Gastrocnemius medialis (tissue), 4 donors: ENCODE measurements at regions of chr11 and their contacts with region 1.

Region 1: GRCh38 chr11:76444384-76445123 is at the start of gene EMSY:
- DNase-seq: peak; percentile 98
- ATAC-seq: peak; percentile 97 to 98
- H3K4me3 ChIP-seq: peak within 1 kb of the TSS; percentile 97 to 99 (median 99)
- H3K27ac ChIP-seq: peak within 1 kb of the TSS; percentile 97 to 98 (median 97)
- H3K4me1 ChIP-seq: peaks cover 16 to 25% of the 10 kb centered on the region in 2 donors
- H3K27me3 ChIP-seq: no peaks in the 10 kb centered on the region
- CTCF ChIP-seq: no peak
- POLR2A ChIP-seq: peak; percentile 95 to 98
- total RNA-seq, gene EMSY: 18.8 to 43.6 (median 19.9) TPM

Region 2: GRCh38 chr11:75654314-75654713 is 790.2 kb before region 1 on chr11:
- in situ Hi-C with region 1: no loop called
- intact Hi-C with region 1: no loop called
- DNase-seq: no peak
- ATAC-seq: no peak
- H3K4me3 ChIP-seq: no peak overlapping the region
- H3K27ac ChIP-seq: no peak overlapping the region
- H3K4me1 ChIP-seq: no peaks in the 10 kb centered on the region
- H3K27me3 ChIP-seq: no peaks in the 10 kb centered on the region
- CTCF ChIP-seq: no peak
- POLR2A ChIP-seq: no peak

Region 3: DNA sequence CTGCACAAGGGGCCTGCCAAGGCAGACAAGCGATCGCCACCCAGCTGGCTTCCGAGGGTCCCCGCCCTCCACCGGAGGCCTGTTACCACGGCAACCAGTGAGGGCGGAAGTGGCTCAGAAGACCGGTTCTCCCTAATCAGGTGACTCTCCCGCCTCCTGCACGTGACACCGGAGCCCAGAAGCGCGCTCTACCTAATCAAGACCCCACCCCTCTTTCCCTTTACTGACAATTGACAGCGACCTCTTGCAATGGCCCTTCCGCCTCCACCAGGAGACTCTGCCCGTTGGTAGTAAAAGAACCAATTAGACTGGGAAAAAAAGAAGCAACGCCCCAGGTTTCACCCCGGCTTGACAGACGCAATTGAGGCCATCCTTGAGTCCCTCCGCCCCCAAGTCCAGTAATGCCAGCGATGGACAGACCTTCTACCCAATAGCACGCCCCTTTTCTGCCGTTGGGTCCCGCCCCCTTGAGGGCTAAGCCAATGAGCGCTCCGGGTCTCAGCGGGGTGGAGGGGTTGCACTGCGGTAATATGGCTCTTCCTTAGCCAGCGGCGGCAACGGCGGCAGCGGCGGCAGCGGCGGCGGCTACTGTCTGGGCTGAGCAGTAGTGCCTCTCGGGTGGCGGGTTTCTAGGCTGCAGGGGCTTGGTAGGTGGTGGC is 629.7 kb before region 1 on chr11 and contains the start of gene UVRAG:
- in situ Hi-C with region 1: no loop called
- intact Hi-C with region 1: loop called (anchors 10 kb)
- DNase-seq: peak; percentile 99
- ATAC-seq: peak; percentile 96
- H3K4me3 ChIP-seq: peak within 1 kb of the TSS; percentile 73 to 88 (median 76)
- H3K27ac ChIP-seq: peak within 1 kb of the TSS; percentile 84 to 95 (median 90)
- H3K4me1 ChIP-seq: peaks cover 25 to 31% of the 10 kb centered on the region in 2 donors
- H3K27me3 ChIP-seq: no peaks in the 10 kb centered on the region
- CTCF ChIP-seq: peak in 4 of 5 experiments; percentile 19 to 32 (median 22)
- POLR2A ChIP-seq: peak; percentile 88 to 93
- total RNA-seq, gene UVRAG: 16.6 to 22.1 (median 19.3) TPM

Region 4: DNA sequence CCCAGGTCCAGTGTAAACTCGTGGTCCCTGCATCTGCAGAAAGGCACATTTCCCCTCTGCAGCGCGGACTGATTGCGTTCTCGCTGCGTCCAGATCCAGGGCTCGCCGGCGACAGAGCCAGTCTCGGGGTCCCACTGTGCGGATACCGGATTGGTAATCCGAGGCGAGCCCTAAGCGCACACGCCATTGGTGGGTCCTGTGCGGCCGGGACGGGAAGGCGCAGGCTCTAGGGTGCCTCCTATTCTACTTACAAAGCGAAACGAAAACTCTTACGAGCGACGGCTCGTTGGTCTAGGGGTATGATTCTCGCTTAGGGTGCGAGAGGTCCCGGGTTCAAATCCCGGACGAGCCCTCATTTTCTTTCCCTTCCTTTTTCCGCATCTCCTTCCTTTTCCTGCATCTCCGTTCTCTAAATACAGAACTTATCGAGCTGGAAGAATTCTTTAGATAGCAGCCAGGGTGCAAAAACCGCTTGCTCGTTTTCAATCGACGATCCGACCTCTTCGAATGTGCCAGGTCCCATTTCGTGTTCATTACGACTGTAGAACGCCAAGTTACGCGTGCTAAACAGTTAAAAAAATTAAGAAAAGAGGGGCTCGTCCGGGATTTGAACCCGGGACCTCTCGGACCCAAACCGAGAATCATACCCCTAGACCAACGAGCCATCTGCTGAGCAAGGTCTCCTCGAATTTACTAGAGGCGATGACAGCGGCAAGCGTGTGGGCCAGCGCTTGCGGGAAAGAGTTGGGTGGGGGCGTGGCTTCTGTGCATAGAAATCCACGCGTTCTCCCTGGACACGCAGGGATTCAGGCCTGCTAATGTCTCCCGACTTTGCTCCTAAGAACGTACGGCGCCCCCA is 209.1 kb before region 1 on chr11:
- in situ Hi-C with region 1: loop called in 1 of 4 experiments (anchors 10 kb)
- intact Hi-C with region 1: no loop called
- DNase-seq: peak; percentile 78 to 83
- ATAC-seq: peak; percentile 83
- H3K4me3 ChIP-seq: peak overlapping the region; percentile 68 to 93 (median 87)
- H3K27ac ChIP-seq: peak overlapping the region; percentile 81 to 91 (median 84)
- H3K4me1 ChIP-seq: peaks cover 0 to 16% of the 10 kb centered on the region in 2 donors
- H3K27me3 ChIP-seq: no peaks in the 10 kb centered on the region
- CTCF ChIP-seq: no peak
- POLR2A ChIP-seq: peak in 1 of 2 donors; percentile 17

Region 5: DNA sequence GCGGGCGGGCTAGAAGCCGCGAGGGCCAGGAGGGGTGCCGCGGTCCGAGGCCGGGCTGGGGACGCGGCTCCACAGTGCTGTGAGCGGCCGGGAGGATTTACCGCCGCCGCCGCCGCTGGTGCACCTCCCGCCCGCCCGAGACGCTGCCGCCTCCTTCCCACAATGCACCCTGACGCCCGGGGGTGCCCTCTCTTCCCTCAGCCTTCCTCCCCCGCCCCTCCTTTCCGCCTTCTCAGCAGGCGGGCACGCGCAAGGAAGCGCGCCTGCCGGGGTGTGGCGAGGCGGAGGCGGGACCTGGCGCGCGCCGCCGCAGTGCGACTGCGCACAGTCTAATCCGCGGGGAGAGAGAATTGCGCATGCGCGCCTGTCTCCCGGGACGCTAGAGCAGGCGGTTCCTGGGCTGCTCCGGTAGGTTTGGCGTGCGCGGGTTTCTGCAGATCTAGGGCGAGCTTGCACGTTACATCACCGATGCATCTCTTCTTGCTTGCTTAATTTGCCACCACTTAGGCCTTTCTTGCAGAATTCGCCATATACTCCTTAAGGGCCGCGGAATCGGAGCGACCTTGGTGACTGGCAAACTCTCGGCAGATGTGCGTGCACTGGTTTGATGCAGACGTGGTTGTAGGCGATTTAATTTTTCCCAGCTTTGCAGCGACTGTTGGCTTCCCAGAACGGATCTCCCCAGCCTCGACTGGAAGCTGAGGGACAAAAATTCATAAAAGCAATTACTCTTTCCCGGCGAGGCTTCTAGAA is 63.4 kb before region 1 on chr11 and contains the starts of genes GVQW3 and THAP12:
- in situ Hi-C with region 1: loop called in 2 of 4 experiments (anchors 5 kb)
- intact Hi-C with region 1: loop called (anchors 1 kb)
- DNase-seq: peak; percentile 96 to 98
- ATAC-seq: peak; percentile 95
- H3K4me3 ChIP-seq: peak within 1 kb of the TSS; percentile 64 to 92 (median 75)
- H3K27ac ChIP-seq: peak within 1 kb of the TSS; percentile 72 to 90 (median 83)
- H3K4me1 ChIP-seq: peaks cover 35 to 36% of the 10 kb centered on the region in 2 donors
- H3K27me3 ChIP-seq: no peaks in the 10 kb centered on the region
- CTCF ChIP-seq: peak in 1 of 5 experiments; percentile 18
- POLR2A ChIP-seq: peak; percentile 81 to 92
- total RNA-seq, gene GVQW3: 0.07 to 0.70 (median 0.33) TPM
- total RNA-seq, gene THAP12: 24.5 to 35.3 (median 30.2) TPM